CD4-positive, alpha-beta T cell (primary cell): ENCODE measurements at regions of chr1 and their contacts with region 1.

Region 1: DNA sequence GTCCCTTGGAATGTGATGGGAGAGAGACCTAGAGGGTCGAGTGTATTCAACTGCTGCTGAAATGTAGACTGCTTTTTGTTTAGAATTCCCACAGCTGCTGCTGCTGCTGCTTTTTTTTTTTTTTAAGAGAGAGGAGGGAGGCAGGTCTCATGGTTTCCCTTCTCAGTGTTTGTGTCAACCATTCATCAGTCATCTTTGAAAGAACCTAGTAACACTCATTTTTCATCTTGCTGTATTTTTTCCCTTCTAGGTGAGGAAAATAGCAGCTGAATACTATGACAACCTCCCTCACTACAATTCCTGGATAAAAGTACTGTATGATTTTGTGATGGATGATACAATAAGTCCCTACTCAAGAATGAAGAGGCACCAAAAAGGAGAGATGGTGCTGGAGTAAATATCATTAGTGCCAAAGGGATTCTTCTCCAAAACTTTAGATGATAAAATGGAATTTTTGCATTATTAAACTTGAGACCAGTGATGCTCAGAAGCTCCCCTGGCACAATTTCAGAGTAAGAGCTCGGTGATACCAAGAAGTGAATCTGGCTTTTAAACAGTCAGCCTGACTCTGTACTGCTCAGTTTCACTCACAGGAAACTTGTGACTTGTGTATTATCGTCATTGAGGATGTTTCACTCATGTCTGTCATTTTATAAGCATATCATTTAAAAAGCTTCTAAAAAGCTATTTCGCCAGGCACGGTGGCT is 9.2 kb downstream of the DEGS1 start:
- DNase-seq: no peak
- ATAC-seq: no peak
- H3K4me3 ChIP-seq: no peak overlapping the region
- H3K4me3 Mint-ChIP-seq: no peak overlapping the region
- H3K27ac ChIP-seq: no peak overlapping the region
- H3K27ac Mint-ChIP-seq: no peak overlapping the region
- H3K4me1 ChIP-seq: peaks cover 7% of the 10 kb centered on the region
- H3K4me1 Mint-ChIP-seq: peaks cover 27% of the 10 kb centered on the region
- H3K27me3 ChIP-seq: no peaks in the 10 kb centered on the region
- H3K27me3 Mint-ChIP-seq: no peaks in the 10 kb centered on the region
- CTCF ChIP-seq: no peak

Region 2: DNA sequence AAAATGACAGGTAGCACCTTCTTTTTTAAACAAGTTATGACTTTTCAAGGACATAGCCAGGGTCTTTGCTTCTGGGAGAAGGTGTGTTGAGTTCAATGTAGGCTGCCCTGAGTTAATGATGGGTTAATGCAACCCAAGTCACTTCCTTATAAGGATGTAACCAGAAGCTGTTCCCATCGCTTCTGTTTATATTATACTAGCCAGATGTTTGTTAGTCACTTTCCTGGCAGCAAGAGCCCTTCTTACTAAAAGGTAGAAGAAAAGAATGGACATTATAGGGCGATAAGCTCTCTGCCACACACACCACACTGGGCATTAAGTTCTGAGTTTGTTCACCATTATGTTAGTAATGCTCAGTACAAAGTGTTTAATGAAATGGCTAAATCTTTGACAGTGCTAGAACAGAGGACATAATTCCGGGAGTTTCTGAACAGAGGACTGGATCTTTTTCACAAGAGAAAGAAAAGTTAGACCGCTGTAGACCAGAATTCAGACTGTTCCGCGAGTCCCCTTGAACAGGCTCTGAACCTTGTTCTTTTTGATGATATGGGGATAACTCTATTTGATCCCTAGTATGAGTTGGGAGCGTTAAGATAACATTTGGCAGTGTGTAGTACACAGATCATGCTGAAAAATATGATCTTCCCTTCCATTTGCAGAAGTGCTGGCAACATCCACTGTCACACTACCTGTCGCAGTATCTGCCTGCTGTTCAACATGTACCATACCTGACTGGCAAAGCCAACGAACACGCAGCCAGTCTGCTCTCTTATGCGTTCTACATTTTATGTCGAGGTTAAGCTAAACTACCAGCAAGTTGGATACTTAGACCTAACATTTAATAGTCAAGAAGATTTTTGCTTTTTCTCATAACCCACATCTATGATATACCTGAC is 31.8 kb after region 1 on chr1:
- CTCF ChIA-PET with region 1: no interaction called
- POLR2A ChIA-PET with region 1: no interaction called
- intact Hi-C with region 1: no loop called
- DNase-seq: no peak
- ATAC-seq: no peak
- H3K4me3 ChIP-seq: no peak overlapping the region
- H3K4me3 Mint-ChIP-seq: no peak overlapping the region
- H3K27ac ChIP-seq: no peak overlapping the region
- H3K27ac Mint-ChIP-seq: no peak overlapping the region
- H3K4me1 ChIP-seq: no peaks in the 10 kb centered on the region
- H3K4me1 Mint-ChIP-seq: no peaks in the 10 kb centered on the region
- H3K27me3 ChIP-seq: no peaks in the 10 kb centered on the region
- H3K27me3 Mint-ChIP-seq: no peaks in the 10 kb centered on the region
- CTCF ChIP-seq: no peak

Region 3: GRCh38 chr1:224245188-224245587 is 53.0 kb after region 1 on chr1:
- CTCF ChIA-PET with region 1: no interaction called
- POLR2A ChIA-PET with region 1: no interaction called
- intact Hi-C with region 1: loop called in 1 of 2 experiments (anchors 5 kb)
- DNase-seq: peak in 10 of 14 experiments; percentile 1 to 70 (median 10)
- ATAC-seq: peak; percentile 85
- H3K4me3 ChIP-seq: no peak overlapping the region
- H3K4me3 Mint-ChIP-seq: peak overlapping the region; percentile 70
- H3K27ac ChIP-seq: peak overlapping the region; percentile 30 to 76
- H3K27ac Mint-ChIP-seq: peak overlapping the region; percentile 93
- H3K4me1 ChIP-seq: peaks cover 14% of the 10 kb centered on the region
- H3K4me1 Mint-ChIP-seq: peaks cover 18% of the 10 kb centered on the region
- H3K27me3 ChIP-seq: no peaks in the 10 kb centered on the region
- H3K27me3 Mint-ChIP-seq: no peaks in the 10 kb centered on the region
- CTCF ChIP-seq: no peak